ENCODE measurements at regions of chr7 and their contacts with region 1.

Region 1: GRCh38 chr7:31744294-31744874 is 57.4 kb downstream of the PPP1R17 start:
- H3K4me3 Mint-ChIP-seq: no peak overlapping the region
- H3K27ac Mint-ChIP-seq: no peak overlapping the region
- H3K4me1 Mint-ChIP-seq: no peaks in the 10 kb centered on the region
- H3K27me3 Mint-ChIP-seq: peaks cover 10% of the 10 kb centered on the region

Region 2: GRCh38 chr7:31763548-31763947 is 19.2 kb after region 1 on chr7:
- intact Hi-C with region 1: no loop called
- H3K4me3 Mint-ChIP-seq: no peak overlapping the region
- H3K27ac Mint-ChIP-seq: no peak overlapping the region
- H3K4me1 Mint-ChIP-seq: no peaks in the 10 kb centered on the region
- H3K27me3 Mint-ChIP-seq: peaks cover 1% of the 10 kb centered on the region

Region 3: DNA sequence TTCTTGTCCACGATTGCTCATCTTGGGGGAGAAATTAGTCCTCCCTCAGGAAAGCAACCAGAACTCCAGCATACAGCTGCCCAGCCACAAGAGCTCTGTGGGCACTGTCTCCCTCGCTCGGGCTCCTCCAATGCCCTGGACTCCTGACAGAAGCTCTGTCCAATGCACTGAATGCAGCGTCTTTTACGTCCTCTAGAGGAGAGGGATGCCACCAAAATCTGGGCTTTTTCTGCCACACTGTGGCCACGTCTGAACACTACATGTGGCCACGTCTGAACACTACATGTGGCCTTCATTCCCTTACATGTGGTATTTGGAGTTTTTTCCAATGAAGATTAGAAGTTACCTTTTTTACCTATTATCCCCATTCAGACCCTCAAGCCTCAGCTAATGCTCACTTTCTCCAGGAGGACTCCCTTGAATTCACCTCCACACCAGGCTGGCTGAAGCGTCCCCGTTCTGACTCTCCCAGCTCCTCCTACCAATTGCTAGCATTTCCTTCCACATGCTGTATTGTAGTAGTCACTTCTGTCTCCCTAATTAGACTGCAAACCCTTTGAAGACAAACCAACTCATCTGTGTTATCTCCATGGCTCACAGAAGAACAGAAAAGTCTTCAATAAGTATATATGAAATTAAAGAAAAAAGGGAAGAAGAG is 460.1 kb after region 1 on chr7:
- intact Hi-C with region 1: loop called (anchors 2 kb)
- H3K4me3 Mint-ChIP-seq: no peak overlapping the region
- H3K27ac Mint-ChIP-seq: no peak overlapping the region
- H3K4me1 Mint-ChIP-seq: no peaks in the 10 kb centered on the region
- H3K27me3 Mint-ChIP-seq: no peaks in the 10 kb centered on the region

Region 4: GRCh38 chr7:32347244-32347828 is 603.0 kb after region 1 on chr7:
- intact Hi-C with region 1: loop called (anchors 2 kb)
- H3K4me3 Mint-ChIP-seq: no peak overlapping the region
- H3K27ac Mint-ChIP-seq: no peak overlapping the region
- H3K4me1 Mint-ChIP-seq: no peaks in the 10 kb centered on the region
- H3K27me3 Mint-ChIP-seq: no peaks in the 10 kb centered on the region

Region 5: DNA sequence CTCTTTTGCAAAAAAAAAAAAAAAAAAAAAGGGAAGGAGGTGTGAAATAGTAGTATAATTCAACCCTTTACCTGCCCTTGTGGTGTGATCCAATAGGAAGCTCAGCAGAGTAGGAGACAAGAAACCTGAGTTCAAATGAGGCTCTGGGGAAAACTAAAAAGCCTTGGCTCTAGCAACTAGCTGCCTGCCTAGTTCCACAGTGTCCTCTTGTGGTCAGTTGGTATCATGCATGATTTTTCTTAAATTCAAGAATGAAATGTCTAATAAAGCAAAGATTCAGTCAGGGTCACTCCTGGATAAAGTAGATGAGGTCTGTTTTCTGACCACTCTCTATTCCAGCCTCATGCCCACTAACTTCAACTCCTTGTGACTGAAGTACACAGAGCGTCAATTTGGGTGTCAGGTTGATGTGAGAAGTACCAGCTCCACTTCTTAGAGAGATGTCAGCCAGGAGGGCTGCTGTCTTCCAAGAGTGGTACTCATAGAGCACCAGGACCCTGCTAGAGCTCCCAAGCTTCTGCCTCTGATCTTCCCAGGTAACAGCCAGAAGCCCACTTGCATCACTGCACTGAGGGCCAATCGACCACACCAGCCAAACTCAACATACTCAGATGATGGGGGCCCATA is 735.3 kb after region 1 on chr7:
- intact Hi-C with region 1: loop called (anchors 2 kb)
- H3K4me3 Mint-ChIP-seq: no peak overlapping the region
- H3K27ac Mint-ChIP-seq: no peak overlapping the region
- H3K4me1 Mint-ChIP-seq: no peaks in the 10 kb centered on the region
- H3K27me3 Mint-ChIP-seq: peaks cover 1% of the 10 kb centered on the region

Measured in dendritic cell treated with granulocyte-macrophage colony-stimulating factor and Interleukin-4, amounts not matched to agents 40 ng/mL and 50 ng/mL, for 4 days (primary cell).